Colonic mucosa (tissue), 4 donors: ENCODE measurements at regions of chr11 and their contacts with region 1.

Region 1: DNA sequence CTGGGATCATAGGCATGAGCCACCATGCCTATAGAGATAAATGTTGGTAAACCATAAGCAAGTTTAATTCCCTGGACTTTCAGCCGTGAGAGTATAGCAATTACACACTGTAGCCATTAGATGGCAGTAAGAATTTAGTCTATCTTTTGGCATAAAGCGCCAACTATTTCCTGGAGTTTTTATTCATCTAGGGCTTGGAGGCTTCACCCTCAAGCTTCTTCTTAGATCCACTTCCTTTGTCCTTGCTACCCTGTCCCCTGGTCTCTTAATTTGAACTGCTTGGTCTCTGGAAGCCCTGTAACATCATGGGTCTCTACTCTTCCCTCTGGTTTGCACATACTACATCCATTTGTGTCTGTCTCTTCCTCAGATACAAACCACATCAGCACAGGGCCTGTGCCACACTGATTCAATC is 38.2 kb downstream of the OR10A6 start:
- DNase-seq: no peak
- H3K4me3 ChIP-seq: no peak overlapping the region
- H3K27ac ChIP-seq: peak overlapping the region; percentile 64
- H3K4me1 ChIP-seq: no peaks in the 10 kb centered on the region
- H3K27me3 ChIP-seq: no peaks in the 10 kb centered on the region
- CTCF ChIP-seq: peak; percentile 62

Region 2: DNA sequence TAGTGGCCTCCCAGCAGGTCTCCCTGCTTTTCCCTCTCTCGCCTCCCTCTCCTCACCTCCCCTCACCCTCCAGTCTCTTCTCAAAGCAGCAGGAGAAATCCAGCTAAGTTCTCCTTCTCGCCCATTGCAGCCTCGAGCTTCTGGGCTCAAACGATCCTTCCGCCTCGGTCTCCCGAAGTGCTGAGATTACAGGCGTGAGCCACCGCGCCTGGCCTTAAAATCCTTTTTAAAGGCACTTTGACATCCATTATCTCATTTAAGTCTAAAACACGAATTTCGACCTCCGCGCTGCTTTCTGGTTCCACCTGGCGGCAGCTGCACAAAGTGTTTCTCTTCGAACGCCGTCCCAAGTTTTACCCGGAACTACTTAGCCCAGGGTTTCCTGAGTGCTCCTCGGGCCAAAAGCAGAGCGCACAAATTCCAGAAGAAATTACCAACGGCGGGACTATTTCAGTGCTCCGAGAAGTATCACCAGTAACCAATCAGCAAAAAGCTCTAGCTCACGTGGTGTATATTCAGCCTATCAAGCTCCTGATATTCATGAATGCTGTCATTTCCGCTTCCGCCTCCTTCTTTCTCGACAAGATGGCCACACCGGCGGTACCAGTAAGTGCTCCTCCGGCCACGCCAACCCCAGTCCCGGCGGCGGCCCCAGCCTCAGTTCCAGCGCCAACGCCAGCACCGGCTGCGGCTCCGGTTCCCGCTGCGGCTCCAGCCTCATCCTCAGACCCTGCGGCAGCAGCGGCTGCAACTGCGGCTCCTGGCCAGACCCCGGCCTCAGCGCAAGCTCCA is 94.1 kb after region 1 on chr11 and contains the start of gene EIF3F:
- intact Hi-C with region 1: loop called (anchors 2 kb)
- DNase-seq: peak; percentile 96
- H3K4me3 ChIP-seq: peak within 1 kb of the TSS; percentile 90
- H3K27ac ChIP-seq: peak within 1 kb of the TSS; percentile 65
- H3K4me1 ChIP-seq: peaks cover 12% of the 10 kb centered on the region
- H3K27me3 ChIP-seq: no peaks in the 10 kb centered on the region
- CTCF ChIP-seq: peak; percentile 83
- total RNA-seq, gene EIF3F: 229 to 242 TPM

Region 3: GRCh38 chr11:8099291-8099899 is 206.5 kb after region 1 on chr11:
- intact Hi-C with region 1: loop called (anchors 10 kb)
- DNase-seq: peak; percentile 84
- H3K4me3 ChIP-seq: no peak overlapping the region
- H3K27ac ChIP-seq: no peak overlapping the region
- H3K4me1 ChIP-seq: no peaks in the 10 kb centered on the region
- H3K27me3 ChIP-seq: no peaks in the 10 kb centered on the region
- CTCF ChIP-seq: peak; percentile 67